Activated CD4-positive, alpha-beta memory T cell treated with anti-CD3 and anti-CD28 coated beads, Interleukin-2, amount 10 ng/mL, durations not matched to agents 7 days and 5 days (primary cell): ENCODE measurements at regions of chr15 and their contacts with region 1.

Region 1: GRCh38 chr15:64093627-64094417 is at the start of gene CIAO2A:
- DNase-seq: peak; percentile 97
- H3K4me3 Mint-ChIP-seq: peak within 1 kb of the TSS; percentile 96
- H3K27ac Mint-ChIP-seq: peak within 1 kb of the TSS; percentile 100
- H3K4me1 Mint-ChIP-seq: peaks cover 69% of the 10 kb centered on the region
- H3K27me3 Mint-ChIP-seq: no peaks in the 10 kb centered on the region
- total RNA-seq, gene CIAO2A: 74.4 to 85.0 TPM

Region 2: DNA sequence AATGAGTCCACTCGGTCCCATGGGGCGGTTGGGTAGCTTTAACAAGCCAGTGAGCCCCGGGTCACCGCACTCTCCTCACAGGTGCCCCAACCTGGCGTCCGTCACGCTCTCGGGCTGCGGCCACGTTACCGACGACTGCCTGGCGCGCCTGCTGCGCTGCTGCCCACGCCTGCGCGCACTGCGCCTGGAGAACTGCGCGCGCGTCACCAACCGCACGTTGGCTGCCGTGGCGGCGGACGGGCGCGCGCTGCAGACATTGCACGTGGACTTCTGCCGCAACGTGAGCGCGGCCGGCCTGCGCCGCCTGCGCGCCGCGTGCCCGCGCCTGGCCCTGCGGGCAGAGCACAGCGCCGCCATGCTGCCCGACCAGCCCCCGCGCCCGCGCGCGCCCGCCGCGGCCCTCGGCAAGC is 493.2 kb before region 1 on chr15:
- CTCF ChIA-PET with region 1: interaction called, 3 read pairs
- POLR2A ChIA-PET with region 1: interaction called, 10 read pairs
- DNase-seq: peak; percentile 91
- H3K4me3 Mint-ChIP-seq: peak overlapping the region; percentile 89
- H3K27ac Mint-ChIP-seq: peak overlapping the region; percentile 87
- H3K4me1 Mint-ChIP-seq: peaks cover 56% of the 10 kb centered on the region
- H3K27me3 Mint-ChIP-seq: no peaks in the 10 kb centered on the region

Region 3: GRCh38 chr15:63610200-63610841 is 483.5 kb before region 1 on chr15:
- CTCF ChIA-PET with region 1: interaction called, 10 read pairs
- POLR2A ChIA-PET with region 1: interaction called, 8 read pairs
- DNase-seq: peak; percentile 86
- H3K4me3 Mint-ChIP-seq: no peak overlapping the region
- H3K27ac Mint-ChIP-seq: peak overlapping the region; percentile 86
- H3K4me1 Mint-ChIP-seq: peaks cover 49% of the 10 kb centered on the region
- H3K27me3 Mint-ChIP-seq: no peaks in the 10 kb centered on the region

Region 4: DNA sequence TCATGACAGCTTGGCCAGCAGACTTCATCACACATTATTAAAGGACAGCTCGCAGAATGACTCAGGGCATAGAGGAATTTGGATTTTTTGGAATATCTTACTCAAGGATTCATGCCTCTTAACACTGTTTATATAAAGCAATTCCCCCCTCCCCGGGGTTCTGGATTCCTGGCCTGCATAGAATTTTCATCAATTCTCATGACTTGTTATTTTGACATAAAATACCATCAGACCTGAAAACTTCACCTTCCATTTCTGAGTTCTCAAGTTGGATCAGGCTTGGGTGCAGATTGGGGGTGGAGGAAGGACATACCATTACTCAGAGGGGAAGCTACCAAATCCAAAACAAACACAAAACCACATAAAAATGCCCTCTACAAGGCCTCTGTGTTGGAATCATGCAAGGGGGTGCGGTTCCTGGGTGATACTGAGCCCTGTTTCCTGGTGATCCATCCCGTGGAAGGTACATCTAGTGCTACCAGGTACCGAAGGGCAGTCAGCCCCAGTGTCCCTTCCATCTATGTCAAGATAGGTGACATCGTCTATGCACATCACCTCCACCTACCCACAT is 142.8 kb before region 1 on chr15:
- CTCF ChIA-PET with region 1: no interaction called
- POLR2A ChIA-PET with region 1: no interaction called
- DNase-seq: no peak
- H3K4me3 Mint-ChIP-seq: no peak overlapping the region
- H3K27ac Mint-ChIP-seq: no peak overlapping the region
- H3K4me1 Mint-ChIP-seq: peaks cover 8% of the 10 kb centered on the region
- H3K27me3 Mint-ChIP-seq: peaks cover 16% of the 10 kb centered on the region

Region 5: GRCh38 chr15:63977119-63977518 is 116.7 kb before region 1 on chr15:
- CTCF ChIA-PET with region 1: no interaction called
- POLR2A ChIA-PET with region 1: no interaction called
- DNase-seq: no peak
- H3K4me3 Mint-ChIP-seq: no peak overlapping the region
- H3K27ac Mint-ChIP-seq: no peak overlapping the region
- H3K4me1 Mint-ChIP-seq: peaks cover 5% of the 10 kb centered on the region
- H3K27me3 Mint-ChIP-seq: no peaks in the 10 kb centered on the region

Region 6: DNA sequence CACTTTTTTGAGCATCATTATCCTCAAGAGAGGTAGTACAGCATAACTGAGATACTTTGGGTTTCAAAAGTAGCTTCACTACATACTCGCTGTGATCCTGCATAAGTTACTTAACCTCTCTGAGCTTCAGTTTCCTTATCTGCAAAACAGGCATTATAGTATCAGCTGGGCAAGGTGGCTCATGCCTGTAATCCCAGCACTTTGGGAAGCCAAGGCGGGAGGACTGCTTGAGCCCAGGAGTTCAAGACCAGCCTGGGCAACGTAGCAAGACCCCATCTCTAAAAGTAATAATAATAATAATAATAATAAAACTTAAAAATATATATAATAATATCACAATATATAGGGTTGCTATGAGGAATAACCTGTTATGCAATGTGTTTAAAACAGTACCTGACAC is 11.1 kb before region 1 on chr15:
- CTCF ChIA-PET with region 1: no interaction called
- POLR2A ChIA-PET with region 1: interaction called, 15 read pairs
- DNase-seq: no peak
- H3K4me3 Mint-ChIP-seq: no peak overlapping the region
- H3K27ac Mint-ChIP-seq: no peak overlapping the region
- H3K4me1 Mint-ChIP-seq: no peaks in the 10 kb centered on the region
- H3K27me3 Mint-ChIP-seq: no peaks in the 10 kb centered on the region

Region 7: DNA sequence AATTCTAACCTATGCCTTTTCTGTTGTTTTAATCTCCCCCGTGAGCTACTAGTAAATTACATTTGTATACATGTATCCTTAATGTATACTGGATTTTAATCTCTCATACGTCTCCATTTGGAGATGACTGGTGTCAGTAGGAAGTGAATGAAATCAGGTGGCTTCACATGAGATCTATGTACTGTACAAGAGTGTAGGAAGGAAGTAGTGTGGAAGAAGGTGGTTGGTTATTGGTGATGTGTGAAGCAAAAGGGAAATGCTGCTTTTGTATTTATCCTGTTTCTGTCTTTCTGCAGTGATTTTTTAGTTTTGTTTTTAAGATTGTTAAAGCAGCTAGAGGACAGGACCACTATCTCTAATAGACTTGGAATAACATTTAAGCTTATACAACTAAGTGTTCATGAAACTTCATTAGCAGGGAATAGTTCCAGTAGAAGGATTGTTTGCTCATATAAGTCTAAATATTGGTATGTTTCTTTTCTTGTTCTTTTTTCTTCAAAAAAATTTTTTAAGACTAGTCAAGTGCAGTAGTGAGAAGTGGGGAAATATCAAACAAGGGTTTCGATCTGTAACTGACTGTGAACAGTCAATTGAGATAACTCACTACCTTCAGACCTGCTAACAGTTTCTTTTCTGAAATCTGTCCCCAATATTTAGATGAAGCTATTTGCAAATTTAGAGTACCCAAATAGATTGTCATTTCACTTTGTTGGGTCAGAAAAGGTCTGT is 17.3 kb after region 1 on chr15:
- CTCF ChIA-PET with region 1: interaction called, 7 read pairs
- POLR2A ChIA-PET with region 1: interaction called, 10 read pairs
- DNase-seq: no peak
- H3K4me3 Mint-ChIP-seq: no peak overlapping the region
- H3K27ac Mint-ChIP-seq: peak overlapping the region; percentile 53
- H3K4me1 Mint-ChIP-seq: peaks cover 34% of the 10 kb centered on the region
- H3K27me3 Mint-ChIP-seq: no peaks in the 10 kb centered on the region

Region 8: DNA sequence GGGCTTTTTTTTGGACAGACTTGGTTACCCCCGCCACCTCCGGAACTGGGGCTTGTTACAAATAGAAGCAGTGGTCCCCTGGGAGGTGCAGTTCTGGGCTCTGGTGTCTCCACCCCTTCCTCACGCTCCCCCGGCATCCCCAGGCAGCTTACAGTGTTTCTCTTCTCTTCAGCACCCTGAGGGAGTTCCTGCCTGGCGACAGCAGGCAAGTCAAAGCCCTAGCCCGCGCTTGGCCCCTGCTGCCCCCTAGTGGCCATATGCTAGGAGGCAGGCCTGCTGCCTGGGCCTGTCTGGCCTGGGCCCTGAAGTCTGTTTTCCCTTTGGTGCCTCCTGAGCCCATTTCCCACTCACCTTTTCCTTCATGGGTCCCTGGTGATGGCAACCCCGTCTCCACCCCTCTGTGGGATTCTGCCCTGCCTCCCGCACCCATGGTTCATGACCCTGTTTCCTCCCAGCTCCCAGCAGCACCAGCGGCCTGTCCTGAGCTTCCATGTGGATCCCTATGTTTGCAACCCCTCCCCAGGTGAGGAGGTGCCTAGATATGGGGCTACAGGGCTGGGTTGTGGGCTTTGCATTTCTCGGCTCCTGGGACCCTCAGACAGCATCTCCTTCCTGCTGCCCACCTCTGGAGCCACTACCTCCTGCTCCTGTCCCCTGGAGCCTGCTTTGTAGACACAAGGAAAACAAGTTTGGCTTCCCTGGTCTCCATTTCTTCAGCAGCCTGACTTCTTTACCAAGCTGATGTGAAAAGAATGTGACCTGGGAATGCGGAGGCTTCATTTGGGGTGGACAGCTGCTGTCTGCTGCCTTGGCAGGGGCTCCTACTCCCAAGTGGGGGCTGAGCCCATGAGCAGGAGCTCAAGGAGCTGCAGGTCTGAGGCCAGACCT is 59.9 kb after region 1 on chr15:
- CTCF ChIA-PET with region 1: interaction called, 11 read pairs
- POLR2A ChIA-PET with region 1: interaction called, 18 read pairs
- DNase-seq: peak; percentile 92
- H3K4me3 Mint-ChIP-seq: peak overlapping the region; percentile 56
- H3K27ac Mint-ChIP-seq: peak overlapping the region; percentile 45
- H3K4me1 Mint-ChIP-seq: peaks cover 44% of the 10 kb centered on the region
- H3K27me3 Mint-ChIP-seq: peaks cover 9% of the 10 kb centered on the region

Region 9: GRCh38 chr15:64162870-64163658 is 69.2 kb after region 1 on chr15 and contains the start of gene PPIB:
- CTCF ChIA-PET with region 1: interaction called, 6 read pairs
- POLR2A ChIA-PET with region 1: interaction called, 25 read pairs
- DNase-seq: peak; percentile 98
- H3K4me3 Mint-ChIP-seq: peak within 1 kb of the TSS; percentile 83
- H3K27ac Mint-ChIP-seq: peak within 1 kb of the TSS; percentile 96
- H3K4me1 Mint-ChIP-seq: peaks cover 58% of the 10 kb centered on the region
- H3K27me3 Mint-ChIP-seq: no peaks in the 10 kb centered on the region
- total RNA-seq, gene PPIB: 392 to 410 TPM

Region 10: DNA sequence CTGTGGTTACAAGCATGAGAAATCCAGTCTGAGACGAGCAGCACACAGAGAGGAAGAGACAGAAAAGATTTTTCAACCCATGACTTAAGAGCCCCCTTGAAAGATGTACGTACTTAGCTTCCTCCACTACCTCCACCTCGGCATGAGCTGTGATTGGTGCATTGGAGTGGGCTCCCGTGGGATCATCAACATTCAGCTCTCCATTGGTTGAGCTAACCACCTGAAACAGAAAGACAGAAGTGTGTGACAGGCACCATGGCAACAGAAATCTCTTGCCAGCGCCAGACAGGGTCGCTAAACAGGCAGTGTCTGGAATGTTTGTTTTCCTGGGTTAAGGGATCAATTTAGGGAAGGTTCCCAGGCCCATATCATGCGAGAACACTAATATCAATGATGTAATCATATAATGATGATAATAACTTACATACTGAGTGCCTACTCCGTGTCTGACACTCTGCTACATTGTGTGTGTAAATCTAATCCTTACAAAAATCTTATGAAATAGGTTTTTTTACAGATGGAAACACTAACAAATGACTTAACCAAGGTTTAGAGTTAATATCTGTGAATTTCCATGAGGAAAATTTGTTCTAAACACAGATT is 86.5 kb after region 1 on chr15:
- CTCF ChIA-PET with region 1: no interaction called
- POLR2A ChIA-PET with region 1: no interaction called
- DNase-seq: no peak
- H3K4me3 Mint-ChIP-seq: no peak overlapping the region
- H3K27ac Mint-ChIP-seq: no peak overlapping the region
- H3K4me1 Mint-ChIP-seq: peaks cover 7% of the 10 kb centered on the region
- H3K27me3 Mint-ChIP-seq: no peaks in the 10 kb centered on the region